Right ventricle myocardium inferior (tissue), 1 donor: ENCODE measurements at regions of chr16 and their contacts with region 1.

Region 1: GRCh38 chr16:84186685-84187437 is at the start of gene TAF1C:
- DNase-seq: peak; percentile 96
- ATAC-seq: peak; percentile 96
- total RNA-seq, gene TAF1C: 26.5 TPM

Region 2: GRCh38 chr16:83956336-83957289 is 230.2 kb before region 1 on chr16:
- intact Hi-C with region 1: loop called (anchors 5 kb)
- DNase-seq: peak; percentile 90
- ATAC-seq: peak; percentile 18

Region 3: GRCh38 chr16:84084570-84085270 is 102.1 kb before region 1 on chr16:
- intact Hi-C with region 1: loop called (anchors 2 kb)
- DNase-seq: peak; percentile 70
- ATAC-seq: peak; percentile 38

Region 4: DNA sequence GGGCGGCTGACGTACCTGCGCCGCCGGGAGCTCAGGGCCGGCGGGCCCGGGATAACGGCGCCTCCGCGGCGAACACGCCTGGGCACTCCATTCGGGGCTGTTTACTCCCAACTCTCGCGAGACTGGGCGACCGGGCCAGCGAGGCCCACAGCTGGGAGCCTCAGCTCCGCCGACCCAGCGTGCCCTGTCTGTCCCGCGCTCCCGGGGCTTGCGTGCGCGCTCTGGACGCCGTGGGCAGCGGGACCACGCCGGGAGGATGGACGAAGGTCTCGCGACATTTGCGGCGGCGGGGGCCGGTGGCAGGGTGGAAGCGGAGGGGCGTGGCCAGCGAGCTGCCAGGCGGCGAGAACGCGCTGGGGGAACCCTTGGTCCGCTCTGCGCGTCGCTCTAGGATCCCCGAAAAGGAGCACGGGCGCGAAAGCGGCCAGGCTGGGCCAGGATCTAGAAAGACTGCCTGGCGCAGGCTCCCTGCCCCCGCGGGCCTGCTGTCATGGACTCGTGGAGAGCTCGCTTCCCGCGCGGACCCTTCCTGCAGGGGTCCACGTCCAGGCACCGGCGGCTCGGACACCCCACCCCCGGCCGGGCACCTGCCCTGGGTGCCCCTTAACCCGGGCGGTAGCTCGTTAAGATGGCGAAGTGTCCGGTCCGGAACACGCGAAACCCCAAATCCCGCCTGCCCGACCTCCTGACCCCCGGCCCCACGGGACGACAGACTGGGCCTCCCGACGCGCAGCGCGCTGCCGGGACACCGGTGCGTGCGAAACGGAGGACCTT is 70.0 kb before region 1 on chr16 and contains the start of gene MBTPS1:
- intact Hi-C with region 1: loop called (anchors 2 kb)
- DNase-seq: peak; percentile 99
- ATAC-seq: peak; percentile 99
- total RNA-seq, gene MBTPS1: 70.2 TPM